ENCODE measurements at regions of chr17 and their contacts with region 1.

Region 1: GRCh38 chr17:2416010-2416734 is 15.3 kb upstream of the MNT start:
- DNase-seq: peak; percentile 98
- H3K4me3 ChIP-seq: no peak overlapping the region
- H3K27ac ChIP-seq: peak overlapping the region; percentile 34 to 66 (median 56)
- H3K4me1 ChIP-seq: peaks cover 17 to 58% (median 51%) of the 10 kb centered on the region in 4 donors
- H3K27me3 ChIP-seq: no peaks in the 10 kb centered on the region
- CTCF ChIP-seq: peak; percentile 98 to 99 (median 99)
- EP300 ChIP-seq: no peak
- POLR2A ChIP-seq: no peak

Region 2: DNA sequence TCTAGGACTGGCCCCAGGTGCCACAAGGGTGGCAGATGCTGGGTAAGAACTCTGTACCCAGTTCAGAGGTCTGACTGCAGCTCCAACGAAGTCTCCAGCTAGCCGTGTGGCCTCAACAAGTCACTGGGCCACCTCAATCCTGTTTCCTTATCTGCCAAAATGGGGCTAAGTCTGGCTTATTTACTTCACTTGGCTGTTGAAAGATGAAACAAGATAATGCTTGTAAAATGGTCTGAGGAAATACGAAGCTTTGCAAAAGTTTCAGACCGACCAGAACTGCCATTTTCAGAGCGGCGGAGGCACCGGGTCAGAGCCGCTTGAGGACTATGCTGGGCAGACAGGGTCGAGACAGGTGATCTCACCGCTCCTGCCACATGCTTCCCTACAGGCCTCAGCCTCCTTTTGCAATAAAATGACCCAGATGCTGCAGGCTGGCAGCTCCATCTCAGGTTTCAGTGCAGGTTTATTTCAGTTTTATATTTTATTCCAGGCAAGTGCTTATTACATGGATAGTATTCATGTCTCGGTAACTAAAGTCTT is 32.5 kb before region 1 on chr17:
- intact Hi-C with region 1: loop called (anchors 1 kb)
- DNase-seq: no peak
- H3K4me3 ChIP-seq: no peak overlapping the region
- H3K27ac ChIP-seq: peak overlapping the region in 2 of 4 donors; percentile 51 to 64
- H3K4me1 ChIP-seq: peaks cover 0 to 64% (median 36%) of the 10 kb centered on the region in 4 donors
- H3K27me3 ChIP-seq: no peaks in the 10 kb centered on the region
- CTCF ChIP-seq: no peak
- EP300 ChIP-seq: no peak
- POLR2A ChIP-seq: no peak

Measured in esophagus muscularis mucosa (tissue), 4 donors.